OCI-LY7 (cell line): ENCODE measurements at regions of chr16 and their contacts with region 1.

Region 1: GRCh38 chr16:57023541-57024249 is 34.3 kb downstream of the NLRC5 start:
- DNase-seq: no peak
- H3K4me3 ChIP-seq: no peak overlapping the region
- H3K27ac ChIP-seq: no peak overlapping the region
- H3K4me1 ChIP-seq: peaks cover 12% of the 10 kb centered on the region
- CTCF ChIP-seq: no peak

Region 2: GRCh38 chr16:56409195-56409594 is 614.5 kb before region 1 on chr16:
- CTCF ChIA-PET with region 1: no interaction called
- POLR2A ChIA-PET with region 1: no interaction called
- intact Hi-C with region 1: no loop called
- DNase-seq: no peak
- H3K4me3 ChIP-seq: no peak overlapping the region
- H3K27ac ChIP-seq: no peak overlapping the region
- H3K4me1 ChIP-seq: no peaks in the 10 kb centered on the region
- CTCF ChIP-seq: no peak

Region 3: GRCh38 chr16:57013229-57013628 is 10.5 kb before region 1 on chr16:
- CTCF ChIA-PET with region 1: no interaction called
- POLR2A ChIA-PET with region 1: interaction called, 15 read pairs
- intact Hi-C with region 1: no loop called
- DNase-seq: no peak
- H3K4me3 ChIP-seq: no peak overlapping the region
- H3K27ac ChIP-seq: peak overlapping the region; percentile 48
- H3K4me1 ChIP-seq: peaks cover 59% of the 10 kb centered on the region
- CTCF ChIP-seq: no peak